Breast epithelium (tissue), 4 donors: ENCODE measurements at regions of chr6 and their contacts with region 1.

Region 1: GRCh38 chr6:156175971-156176421 is 601.2 kb upstream of the ARID1B start:
- DNase-seq: peak; percentile 44 to 52
- H3K4me3 ChIP-seq: peak overlapping the region in 2 of 3 donors; percentile 14 to 22
- H3K27ac ChIP-seq: no peak overlapping the region
- H3K4me1 ChIP-seq: no peaks in the 10 kb centered on the region
- H3K27me3 ChIP-seq: no peaks in the 10 kb centered on the region
- CTCF ChIP-seq: peak in 2 of 3 donors; percentile 51 to 54
- POLR2A ChIP-seq: no peak

Region 2: GRCh38 chr6:156107624-156108101 is 68.3 kb before region 1 on chr6:
- intact Hi-C with region 1: no loop called
- DNase-seq: no peak
- H3K4me3 ChIP-seq: no peak overlapping the region
- H3K27ac ChIP-seq: no peak overlapping the region
- H3K4me1 ChIP-seq: no peaks in the 10 kb centered on the region
- H3K27me3 ChIP-seq: no peaks in the 10 kb centered on the region
- CTCF ChIP-seq: no peak
- POLR2A ChIP-seq: no peak

Region 3: GRCh38 chr6:156163311-156163710 is 12.7 kb before region 1 on chr6:
- intact Hi-C with region 1: loop called (anchors 2 kb)
- DNase-seq: no peak
- H3K4me3 ChIP-seq: no peak overlapping the region
- H3K27ac ChIP-seq: no peak overlapping the region
- H3K4me1 ChIP-seq: no peaks in the 10 kb centered on the region
- H3K27me3 ChIP-seq: no peaks in the 10 kb centered on the region
- CTCF ChIP-seq: no peak
- POLR2A ChIP-seq: no peak

Region 4: GRCh38 chr6:156219973-156220372 is 44.0 kb after region 1 on chr6:
- intact Hi-C with region 1: no loop called
- DNase-seq: no peak
- H3K4me3 ChIP-seq: no peak overlapping the region
- H3K27ac ChIP-seq: no peak overlapping the region
- H3K4me1 ChIP-seq: no peaks in the 10 kb centered on the region
- H3K27me3 ChIP-seq: no peaks in the 10 kb centered on the region
- CTCF ChIP-seq: no peak
- POLR2A ChIP-seq: no peak